Natural killer cell (primary cell): ENCODE measurements at regions of chr17 and their contacts with region 1.

Region 1: DNA sequence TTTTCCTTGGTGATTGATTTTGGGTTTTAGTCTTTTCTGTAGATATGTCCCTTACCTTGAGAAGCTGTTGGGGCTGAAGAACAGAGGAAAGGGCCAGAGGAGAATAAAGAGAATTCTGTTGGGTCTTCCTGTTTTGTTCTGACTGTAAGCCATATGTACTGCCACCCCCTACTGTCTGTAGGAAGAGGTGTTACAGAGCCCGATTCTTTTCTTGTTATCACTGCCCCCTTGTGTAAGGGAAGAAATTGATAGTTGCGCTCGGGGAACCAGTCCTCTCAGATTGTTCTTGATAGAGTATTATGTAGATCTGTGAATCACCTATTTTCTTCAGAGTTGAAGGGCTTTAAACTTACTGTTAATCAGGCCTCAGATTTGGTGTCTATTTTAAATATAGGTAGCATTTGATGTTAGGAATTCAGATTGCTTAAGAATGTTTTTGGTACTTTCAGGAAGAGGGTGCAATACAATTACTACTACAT is 2.4 kb downstream of the TANC2 start:
- DNase-seq: peak in 1 of 2 donors; percentile 86
- ATAC-seq: peak; percentile 46 to 66 (median 46)
- H3K4me3 ChIP-seq: no peak overlapping the region
- H3K4me3 Mint-ChIP-seq: peak overlapping the region; percentile 83
- H3K27ac ChIP-seq: no peak overlapping the region
- H3K27ac Mint-ChIP-seq: peak overlapping the region; percentile 40 to 54
- H3K4me1 ChIP-seq: peaks cover 15% of the 10 kb centered on the region
- H3K4me1 Mint-ChIP-seq: peaks cover 27 to 37% of the 10 kb centered on the region in 2 donors
- H3K27me3 ChIP-seq: no peaks in the 10 kb centered on the region
- H3K27me3 Mint-ChIP-seq: no peaks in the 10 kb centered on the region
- CTCF ChIP-seq: peak; percentile 96

Region 2: GRCh38 chr17:62703775-62704378 is 264.6 kb before region 1 on chr17:
- intact Hi-C with region 1: loop called (anchors 1 kb)
- DNase-seq: peak; percentile 77 to 83
- ATAC-seq: peak; percentile 89 to 97 (median 94)
- H3K4me3 ChIP-seq: peak overlapping the region; percentile 46
- H3K4me3 Mint-ChIP-seq: peak overlapping the region; percentile 50
- H3K27ac ChIP-seq: no peak overlapping the region
- H3K27ac Mint-ChIP-seq: peak overlapping the region in 1 of 2 donors; percentile 63
- H3K4me1 ChIP-seq: peaks cover 23% of the 10 kb centered on the region
- H3K4me1 Mint-ChIP-seq: peaks cover 10 to 12% of the 10 kb centered on the region in 2 donors
- H3K27me3 ChIP-seq: no peaks in the 10 kb centered on the region
- H3K27me3 Mint-ChIP-seq: peaks cover 0 to 2% of the 10 kb centered on the region in 2 donors
- CTCF ChIP-seq: peak; percentile 92

Region 3: DNA sequence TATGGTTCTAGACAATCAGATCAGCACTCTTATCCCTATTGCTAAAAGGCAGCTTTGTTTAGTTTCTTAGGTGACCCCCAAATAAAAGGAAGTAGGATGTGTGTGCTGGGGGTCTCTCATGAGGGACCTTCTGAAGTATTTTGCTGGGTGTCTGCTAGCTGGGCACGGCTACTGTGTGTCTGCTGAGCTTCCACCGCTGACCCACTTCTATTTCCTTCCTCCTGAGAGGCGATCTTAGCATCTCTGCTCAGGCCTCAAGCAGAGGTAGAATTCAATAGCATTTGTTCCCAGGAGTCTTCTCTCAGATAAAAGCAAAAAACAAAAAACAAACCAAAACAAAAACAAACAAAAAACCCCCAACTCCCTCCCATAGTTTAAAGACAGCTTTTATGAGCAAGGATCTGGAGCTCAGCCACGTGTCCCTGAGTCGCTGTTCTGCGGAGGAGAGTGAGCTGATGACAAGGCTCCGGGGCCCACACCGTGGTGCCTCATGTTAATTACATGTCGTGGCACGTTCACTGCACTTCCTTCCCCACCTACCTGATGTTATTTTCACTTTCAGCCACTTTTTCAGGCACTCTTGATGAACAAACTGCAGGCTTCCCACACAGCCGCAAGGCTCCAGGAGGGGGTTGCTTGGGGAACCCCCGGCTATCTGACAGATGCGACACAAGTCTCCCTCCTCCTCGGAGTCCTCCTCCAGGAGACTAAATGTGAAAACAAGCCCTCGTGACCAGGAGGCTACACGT is 243.9 kb before region 1 on chr17:
- intact Hi-C with region 1: loop called (anchors 1 kb)
- DNase-seq: peak; percentile 60 to 89
- ATAC-seq: peak; percentile 92 to 93 (median 93)
- H3K4me3 ChIP-seq: peak overlapping the region; percentile 1
- H3K4me3 Mint-ChIP-seq: peak overlapping the region; percentile 85
- H3K27ac ChIP-seq: peak overlapping the region; percentile 92
- H3K27ac Mint-ChIP-seq: peak overlapping the region; percentile 97 to 98
- H3K4me1 ChIP-seq: peaks cover 28% of the 10 kb centered on the region
- H3K4me1 Mint-ChIP-seq: peaks cover 42 to 48% of the 10 kb centered on the region in 2 donors
- H3K27me3 ChIP-seq: no peaks in the 10 kb centered on the region
- H3K27me3 Mint-ChIP-seq: no peaks in the 10 kb centered on the region
- CTCF ChIP-seq: no peak

Region 4: DNA sequence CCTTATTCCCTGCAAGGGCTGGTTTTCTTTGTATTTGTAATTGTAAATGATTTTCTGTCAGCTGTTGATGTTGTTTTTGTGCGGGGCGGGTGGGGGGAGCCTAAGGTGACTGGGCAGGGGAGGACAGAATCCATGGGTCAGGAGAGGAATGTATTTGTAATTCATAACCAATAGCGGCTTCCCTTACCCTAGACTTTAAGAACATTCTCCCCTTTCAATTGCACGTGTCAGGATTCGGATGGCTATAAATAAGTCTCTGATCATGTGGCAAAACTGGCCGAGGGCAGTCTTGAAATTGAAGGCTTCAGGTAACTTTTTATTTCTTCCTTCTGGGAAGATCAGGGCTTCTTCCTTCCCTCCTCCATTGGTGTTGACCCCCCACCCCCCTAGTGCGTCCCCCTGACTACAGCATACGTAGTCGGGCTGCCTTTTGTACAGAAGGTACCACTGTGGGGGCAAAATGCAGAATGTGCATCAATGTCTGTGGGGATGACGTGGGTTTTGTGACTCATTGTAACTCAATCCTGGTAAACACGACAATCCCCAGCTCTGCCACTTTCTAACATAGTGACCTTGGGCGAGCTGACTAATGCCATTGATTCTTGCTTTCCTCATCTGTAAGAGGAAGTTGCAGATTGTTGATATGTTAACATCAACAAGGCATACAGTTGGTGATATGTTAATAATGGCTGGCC is 176.6 kb before region 1 on chr17:
- intact Hi-C with region 1: loop called (anchors 5 kb)
- DNase-seq: no peak
- ATAC-seq: no peak
- H3K4me3 ChIP-seq: no peak overlapping the region
- H3K4me3 Mint-ChIP-seq: peak overlapping the region; percentile 73
- H3K27ac ChIP-seq: no peak overlapping the region
- H3K27ac Mint-ChIP-seq: peak overlapping the region; percentile 68 to 70
- H3K4me1 ChIP-seq: peaks cover 14% of the 10 kb centered on the region
- H3K4me1 Mint-ChIP-seq: peaks cover 12 to 16% of the 10 kb centered on the region in 2 donors
- H3K27me3 ChIP-seq: no peaks in the 10 kb centered on the region
- H3K27me3 Mint-ChIP-seq: peaks cover 0 to 2% of the 10 kb centered on the region in 2 donors
- CTCF ChIP-seq: no peak

Region 5: DNA sequence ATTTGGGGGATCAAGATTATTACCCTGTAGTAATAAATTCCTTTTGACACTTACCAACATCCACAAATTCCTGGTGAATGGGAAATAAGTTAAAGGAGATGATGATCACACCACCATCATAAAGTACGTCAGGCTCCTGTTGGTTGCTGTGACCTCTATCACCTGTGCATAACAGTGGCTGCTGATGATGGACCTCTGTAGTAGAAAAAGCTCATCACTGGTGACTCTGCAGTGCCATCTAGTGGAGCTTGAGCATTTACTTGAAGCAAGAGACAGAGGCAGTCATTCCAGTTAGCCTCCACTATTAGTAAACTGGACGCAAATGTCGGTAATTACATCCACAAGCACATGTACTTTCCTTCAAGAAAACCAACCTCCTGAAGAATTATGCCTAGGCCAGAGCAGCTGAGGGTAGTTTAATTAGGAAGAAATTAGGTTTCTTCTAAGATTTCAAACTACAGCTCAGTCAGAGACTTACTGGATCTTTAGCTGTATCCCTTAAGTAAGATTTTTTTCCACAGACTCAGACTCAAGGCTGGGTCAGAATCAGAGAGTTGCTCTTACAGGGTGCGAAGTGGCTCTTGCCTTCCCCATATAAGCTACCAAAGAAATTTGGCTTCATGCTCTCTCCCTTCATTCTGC is 438.3 kb after region 1 on chr17:
- intact Hi-C with region 1: no loop called
- DNase-seq: peak; percentile 34 to 89
- ATAC-seq: peak; percentile 84 to 91 (median 88)
- H3K4me3 ChIP-seq: no peak overlapping the region
- H3K4me3 Mint-ChIP-seq: no peak overlapping the region
- H3K27ac ChIP-seq: no peak overlapping the region
- H3K27ac Mint-ChIP-seq: no peak overlapping the region
- H3K4me1 ChIP-seq: no peaks in the 10 kb centered on the region
- H3K4me1 Mint-ChIP-seq: peaks cover 0 to 5% of the 10 kb centered on the region in 2 donors
- H3K27me3 ChIP-seq: no peaks in the 10 kb centered on the region
- H3K27me3 Mint-ChIP-seq: no peaks in the 10 kb centered on the region
- CTCF ChIP-seq: peak; percentile 93